Activated T-helper 1 cell treated with anti-CD3 and anti-CD28 coated beads, Interleukin-12 subunit alpha, Interleukin-12 subunit beta, Interleukin-2, Interleukin-4 antibody, amounts not matched to agents 30 ng/mL and 10 ng/mL and 1 ng/mL, durations not matched to agents 14 hours and 24 hours and 36 hours (primary cell): ENCODE measurements at regions of chr3 and their contacts with region 1.

Region 1: GRCh38 chr3:17742108-17742879 is at the start of gene TBC1D5:
- DNase-seq: peak; percentile 90
- H3K4me3 Mint-ChIP-seq: peak within 1 kb of the TSS; percentile 92
- H3K27ac Mint-ChIP-seq: peak within 1 kb of the TSS; percentile 97
- H3K4me1 Mint-ChIP-seq: peaks cover 56% of the 10 kb centered on the region
- H3K27me3 Mint-ChIP-seq: peaks cover 2% of the 10 kb centered on the region
- total RNA-seq, gene TBC1D5: 31.4 and 33.8 TPM in 2 replicates

Region 2: GRCh38 chr3:15859507-15860013 is 1882.7 kb before region 1 on chr3:
- intact Hi-C with region 1: loop called (anchors 2 kb)
- DNase-seq: peak; percentile 78
- H3K4me3 Mint-ChIP-seq: peak overlapping the region; percentile 92
- H3K27ac Mint-ChIP-seq: peak overlapping the region; percentile 91
- H3K4me1 Mint-ChIP-seq: peaks cover 33% of the 10 kb centered on the region
- H3K27me3 Mint-ChIP-seq: peaks cover 3% of the 10 kb centered on the region

Region 3: DNA sequence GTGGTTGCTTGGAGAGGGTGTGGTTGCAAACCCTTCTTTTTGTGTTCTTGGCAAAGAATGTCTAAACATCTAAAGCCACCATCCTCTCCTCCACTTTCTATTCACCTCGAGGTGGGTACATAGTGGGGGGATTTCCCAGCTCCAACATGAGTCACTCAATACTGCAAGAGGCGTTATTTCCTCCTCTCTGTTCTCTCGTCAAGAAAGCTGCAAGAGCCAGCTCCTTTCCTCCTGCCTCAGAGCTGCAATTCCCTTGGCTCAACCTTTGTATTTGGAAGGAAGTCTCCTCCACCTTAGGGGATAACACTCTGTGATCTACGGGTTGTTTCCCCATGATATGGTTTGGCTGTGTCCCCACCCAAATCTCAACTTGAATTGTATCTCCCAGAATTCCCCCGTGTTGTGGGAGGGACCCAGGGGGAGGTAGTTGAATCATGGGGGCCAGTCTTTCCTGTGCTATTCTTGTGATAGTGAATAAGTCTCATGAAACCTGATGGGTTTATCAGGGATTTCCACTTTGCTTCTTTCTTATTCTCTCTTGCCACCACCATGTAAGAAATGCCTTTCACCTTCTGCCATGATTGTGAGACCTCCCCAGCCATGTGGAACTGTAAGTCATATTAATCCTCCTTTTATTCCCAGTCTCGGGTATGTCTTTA is 719.2 kb before region 1 on chr3:
- intact Hi-C with region 1: loop called (anchors 10 kb)
- DNase-seq: peak; percentile 61
- H3K4me3 Mint-ChIP-seq: peak overlapping the region; percentile 47
- H3K27ac Mint-ChIP-seq: peak overlapping the region; percentile 75
- H3K4me1 Mint-ChIP-seq: peaks cover 58% of the 10 kb centered on the region
- H3K27me3 Mint-ChIP-seq: no peaks in the 10 kb centered on the region

Region 4: GRCh38 chr3:17423786-17424536 is 318.3 kb before region 1 on chr3:
- intact Hi-C with region 1: no loop called
- DNase-seq: no peak
- H3K4me3 Mint-ChIP-seq: no peak overlapping the region
- H3K27ac Mint-ChIP-seq: no peak overlapping the region
- H3K4me1 Mint-ChIP-seq: no peaks in the 10 kb centered on the region
- H3K27me3 Mint-ChIP-seq: no peaks in the 10 kb centered on the region

Region 5: GRCh38 chr3:17579289-17580031 is 162.8 kb before region 1 on chr3:
- intact Hi-C with region 1: loop called (anchors 5 kb)
- DNase-seq: no peak
- H3K4me3 Mint-ChIP-seq: no peak overlapping the region
- H3K27ac Mint-ChIP-seq: no peak overlapping the region
- H3K4me1 Mint-ChIP-seq: no peaks in the 10 kb centered on the region
- H3K27me3 Mint-ChIP-seq: no peaks in the 10 kb centered on the region

Region 6: DNA sequence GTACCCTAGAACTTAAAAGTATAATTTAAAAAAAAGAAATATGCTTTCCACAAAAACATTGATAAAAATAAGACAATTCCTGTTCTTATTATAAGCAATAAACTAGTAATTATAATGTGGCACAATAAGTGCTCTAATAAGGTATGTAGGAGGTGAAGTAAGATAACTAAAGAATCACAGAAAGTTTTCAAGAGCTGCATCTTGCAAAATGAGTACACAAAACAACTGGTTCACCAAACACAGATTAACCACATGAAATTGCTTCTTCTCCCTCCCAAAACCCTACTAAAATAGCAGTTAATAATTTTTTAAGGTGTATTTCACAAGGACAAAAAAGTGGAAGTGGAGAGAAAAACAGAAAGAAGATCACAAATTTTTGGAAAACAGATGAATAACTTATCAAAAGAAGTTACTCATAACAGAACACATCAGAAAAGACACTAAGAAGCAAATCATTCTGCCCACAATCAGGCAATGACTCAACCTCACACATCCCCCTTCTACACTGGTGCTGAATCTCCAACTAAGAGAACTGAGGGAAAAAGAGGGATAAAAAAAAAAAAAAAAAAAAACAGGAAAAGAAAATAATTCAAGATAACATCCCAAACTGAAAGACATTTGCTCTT is 64.1 kb before region 1 on chr3:
- intact Hi-C with region 1: loop called (anchors 2 kb)
- DNase-seq: no peak
- H3K4me3 Mint-ChIP-seq: no peak overlapping the region
- H3K27ac Mint-ChIP-seq: no peak overlapping the region
- H3K4me1 Mint-ChIP-seq: peaks cover 7% of the 10 kb centered on the region
- H3K27me3 Mint-ChIP-seq: no peaks in the 10 kb centered on the region

Region 7: DNA sequence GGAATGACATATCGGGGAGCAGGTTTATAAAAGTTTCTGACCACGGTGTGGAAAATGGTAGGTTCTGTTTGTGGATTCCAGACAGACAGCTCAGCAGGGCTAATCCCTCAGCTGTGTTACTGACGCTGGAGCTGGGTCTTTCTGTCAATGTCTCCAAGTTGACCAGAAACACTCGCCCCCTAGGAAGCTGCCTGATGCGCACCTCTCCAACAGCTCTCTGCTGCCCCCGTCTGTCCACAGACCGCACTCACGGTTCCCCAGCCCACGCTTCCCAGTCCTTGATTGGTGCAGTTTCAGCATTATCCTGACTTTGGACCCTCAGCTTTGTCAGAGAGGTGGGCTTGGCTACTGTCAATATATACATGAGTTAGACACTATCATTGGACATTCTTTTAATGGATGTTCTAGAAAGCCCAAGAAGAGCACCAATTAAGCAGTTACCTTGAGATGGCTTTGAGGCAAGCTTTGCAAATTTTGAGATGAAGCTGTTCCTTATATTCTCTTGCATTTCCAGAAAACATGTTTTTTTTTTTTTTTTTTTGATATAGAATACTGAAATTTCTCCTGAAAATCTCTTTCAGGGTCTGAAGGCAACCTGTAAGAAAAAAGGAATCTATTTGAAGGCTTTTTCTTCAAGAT is 99.0 kb after region 1 on chr3:
- intact Hi-C with region 1: loop called (anchors 1 kb)
- DNase-seq: peak; percentile 49
- H3K4me3 Mint-ChIP-seq: no peak overlapping the region
- H3K27ac Mint-ChIP-seq: no peak overlapping the region
- H3K4me1 Mint-ChIP-seq: no peaks in the 10 kb centered on the region
- H3K27me3 Mint-ChIP-seq: peaks cover 4% of the 10 kb centered on the region

Region 8: GRCh38 chr3:18444595-18445400 is 702.5 kb after region 1 on chr3:
- intact Hi-C with region 1: loop called (anchors 2 kb)
- DNase-seq: peak; percentile 75
- H3K4me3 Mint-ChIP-seq: peak overlapping the region; percentile 99
- H3K27ac Mint-ChIP-seq: peak overlapping the region; percentile 97
- H3K4me1 Mint-ChIP-seq: peaks cover 54% of the 10 kb centered on the region
- H3K27me3 Mint-ChIP-seq: peaks cover 1% of the 10 kb centered on the region